Dendritic cell treated with granulocyte-macrophage colony-stimulating factor and Interleukin-4, amounts not matched to agents 40 ng/mL and 50 ng/mL, for 4 days (primary cell): ENCODE measurements at regions of chr12 and their contacts with region 1.

Region 1: DNA sequence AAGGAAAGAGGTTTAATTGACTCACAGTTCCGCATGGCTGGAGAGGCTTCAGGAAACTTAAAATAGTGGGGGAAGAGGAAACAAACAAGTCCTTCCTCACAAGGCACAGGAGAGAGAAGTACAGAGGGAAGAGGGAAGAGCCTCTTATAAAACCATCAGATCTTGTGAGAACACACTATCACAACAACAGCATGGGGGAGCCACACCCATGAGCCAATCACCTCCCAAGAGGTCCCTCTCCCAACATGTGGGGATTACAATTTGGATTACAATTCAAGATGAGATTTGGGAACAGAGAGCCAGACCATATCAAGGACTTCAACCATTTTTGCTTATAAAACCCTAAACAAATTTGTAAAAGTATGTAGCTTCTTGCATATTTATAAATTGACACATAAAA is 45.8 kb downstream of the SLCO1C1 start:
- H3K4me3 Mint-ChIP-seq: no peak overlapping the region
- H3K27ac Mint-ChIP-seq: no peak overlapping the region
- H3K4me1 Mint-ChIP-seq: no peaks in the 10 kb centered on the region
- H3K27me3 Mint-ChIP-seq: no peaks in the 10 kb centered on the region

Region 2: GRCh38 chr12:20792971-20793370 is 52.0 kb after region 1 on chr12:
- intact Hi-C with region 1: loop called (anchors 1 kb)
- H3K4me3 Mint-ChIP-seq: no peak overlapping the region
- H3K27ac Mint-ChIP-seq: no peak overlapping the region
- H3K4me1 Mint-ChIP-seq: no peaks in the 10 kb centered on the region
- H3K27me3 Mint-ChIP-seq: no peaks in the 10 kb centered on the region